Activated CD4-positive, alpha-beta memory T cell treated with anti-CD3 and anti-CD28 coated beads for 36 hours (primary cell): ENCODE measurements at regions of chr5 and their contacts with region 1.

Region 1: DNA sequence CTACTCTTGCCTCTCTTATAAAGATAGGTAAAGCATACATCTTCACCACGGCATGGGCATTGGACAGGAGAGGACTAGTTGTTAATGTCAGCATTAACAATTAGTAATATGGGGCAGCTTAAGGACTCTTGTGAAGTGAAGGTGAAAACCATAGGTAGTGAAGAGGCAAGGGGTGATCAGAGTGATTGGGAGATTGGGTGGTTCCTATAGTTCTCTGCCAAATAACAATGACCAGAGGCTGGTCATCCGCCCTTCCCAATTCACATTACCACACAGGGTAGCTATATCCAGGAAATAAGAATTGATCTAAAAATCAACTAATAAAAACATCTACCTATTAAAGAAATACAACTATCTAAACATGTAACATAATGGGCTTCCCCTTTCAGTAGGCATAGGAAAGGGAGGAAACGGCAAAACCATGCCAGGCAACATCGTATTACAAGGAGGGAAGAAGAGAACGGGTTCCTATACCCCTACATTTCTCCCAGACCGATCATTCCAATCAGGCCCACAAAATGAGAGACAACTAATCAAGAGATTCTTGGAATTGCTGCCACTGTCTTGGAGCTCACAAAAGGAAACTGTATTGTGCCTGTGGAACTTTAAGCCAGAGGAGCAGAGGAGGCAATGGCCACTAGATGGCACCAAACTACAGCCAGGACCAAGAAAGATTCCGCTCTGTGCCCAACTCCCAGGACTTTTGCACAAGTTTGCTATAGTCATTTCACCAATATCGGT is 121.6 kb downstream of the FBXL17 start:
- DNase-seq: peak; percentile 76
- H3K4me3 Mint-ChIP-seq: no peak overlapping the region
- H3K27ac Mint-ChIP-seq: no peak overlapping the region
- H3K4me1 Mint-ChIP-seq: peaks cover 10% of the 10 kb centered on the region
- H3K27me3 Mint-ChIP-seq: no peaks in the 10 kb centered on the region

Region 2: DNA sequence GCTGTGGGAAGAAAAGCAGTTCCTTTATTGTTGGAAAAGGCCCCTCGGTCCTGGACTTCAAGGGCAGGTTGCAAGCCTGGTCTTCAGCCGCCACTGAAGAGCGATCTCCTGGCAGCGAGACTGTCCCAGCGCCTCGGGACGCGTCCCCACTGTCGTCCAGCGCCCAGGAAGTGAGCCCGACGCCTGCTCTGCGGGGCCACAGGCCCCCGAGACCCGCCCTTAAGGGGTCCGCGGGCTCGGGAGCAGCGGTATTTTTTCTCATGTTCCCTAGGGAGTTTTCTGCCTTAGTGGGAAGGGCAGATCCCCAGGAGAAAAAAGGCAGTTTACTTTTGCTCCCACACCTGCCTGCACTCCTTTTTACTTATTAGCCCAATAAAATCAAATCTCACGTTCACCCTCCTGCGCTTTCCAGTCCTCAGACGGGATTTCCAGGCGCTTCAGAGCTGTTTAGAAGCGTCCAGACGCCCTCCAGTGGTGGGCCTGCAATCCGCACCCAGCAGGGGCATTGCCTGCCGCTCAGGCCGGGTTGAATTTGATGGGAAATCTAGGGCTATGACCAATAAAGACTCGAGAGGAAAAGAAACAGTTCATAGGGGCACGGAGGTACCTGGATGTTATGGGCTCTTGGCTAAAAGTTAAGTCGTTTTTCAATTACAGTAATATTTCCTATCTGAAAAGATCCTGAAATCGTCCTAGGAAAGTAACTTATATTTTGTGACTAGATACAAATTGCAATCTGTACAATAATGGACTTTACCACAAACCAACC is 586.7 kb before region 1 on chr5:
- CTCF ChIA-PET with region 1: no interaction called
- POLR2A ChIA-PET with region 1: no interaction called
- intact Hi-C with region 1: no loop called
- DNase-seq: peak; percentile 86
- H3K4me3 Mint-ChIP-seq: peak overlapping the region; percentile 59
- H3K27ac Mint-ChIP-seq: no peak overlapping the region
- H3K4me1 Mint-ChIP-seq: peaks cover 29% of the 10 kb centered on the region
- H3K27me3 Mint-ChIP-seq: peaks cover 52% of the 10 kb centered on the region

Region 3: DNA sequence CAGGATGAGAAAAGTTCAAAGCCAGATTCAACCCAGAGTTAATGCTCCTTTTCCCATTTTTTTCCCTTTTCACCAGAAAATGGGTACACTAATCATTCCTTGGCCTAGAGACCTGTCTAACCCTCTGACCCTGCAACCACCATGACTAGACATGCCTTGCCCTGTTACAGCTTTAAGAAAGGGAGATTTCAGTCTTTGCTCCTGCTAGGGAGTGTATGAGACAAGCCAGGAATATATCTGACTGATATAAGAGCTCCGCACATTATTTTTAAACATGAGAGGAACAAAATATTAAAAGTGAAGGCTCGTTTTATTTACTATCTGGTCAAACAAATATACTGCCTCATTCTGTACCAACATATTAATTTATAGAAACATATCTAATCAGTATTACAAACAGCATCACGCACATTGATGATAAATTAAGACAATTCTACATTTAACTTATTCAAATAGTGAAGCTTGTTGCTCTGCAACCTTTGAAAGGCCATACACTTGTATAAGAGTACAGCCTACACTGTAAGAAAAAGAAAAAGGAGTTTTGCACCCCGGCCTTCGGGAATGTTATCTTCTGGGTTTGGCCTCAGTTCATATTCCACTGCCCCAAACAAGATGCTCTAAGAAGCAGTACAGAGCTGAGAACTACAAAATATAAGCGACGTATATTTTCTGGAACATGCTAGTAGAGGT is 11.0 kb before region 1 on chr5:
- CTCF ChIA-PET with region 1: interaction called, 15 read pairs
- POLR2A ChIA-PET with region 1: no interaction called
- intact Hi-C with region 1: no loop called
- DNase-seq: no peak
- H3K4me3 Mint-ChIP-seq: no peak overlapping the region
- H3K27ac Mint-ChIP-seq: no peak overlapping the region
- H3K4me1 Mint-ChIP-seq: no peaks in the 10 kb centered on the region
- H3K27me3 Mint-ChIP-seq: no peaks in the 10 kb centered on the region

Region 4: DNA sequence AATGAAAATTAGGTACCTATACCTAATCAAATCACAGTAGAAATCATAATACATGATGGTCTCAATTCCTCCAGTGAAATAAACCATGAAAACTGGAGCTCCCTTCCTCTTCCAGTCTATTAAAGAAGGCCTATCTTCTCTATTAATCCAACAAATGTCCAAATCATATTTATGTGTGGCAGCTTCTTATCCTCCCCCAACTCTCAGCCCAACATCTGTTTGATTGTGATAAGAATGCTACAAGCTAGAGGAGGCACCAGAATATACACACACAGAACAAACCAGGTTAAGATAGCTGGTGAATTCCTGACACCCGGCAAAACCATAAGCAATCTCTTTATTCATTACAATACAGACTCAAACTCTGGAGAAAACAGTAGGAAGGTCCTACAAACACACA is 10.8 kb after region 1 on chr5:
- CTCF ChIA-PET with region 1: interaction called, 10 read pairs
- POLR2A ChIA-PET with region 1: no interaction called
- intact Hi-C with region 1: no loop called
- DNase-seq: no peak
- H3K4me3 Mint-ChIP-seq: no peak overlapping the region
- H3K27ac Mint-ChIP-seq: no peak overlapping the region
- H3K4me1 Mint-ChIP-seq: no peaks in the 10 kb centered on the region
- H3K27me3 Mint-ChIP-seq: no peaks in the 10 kb centered on the region

Region 5: GRCh38 chr5:108345541-108346171 is 85.4 kb after region 1 on chr5:
- CTCF ChIA-PET with region 1: interaction called, 71 read pairs
- POLR2A ChIA-PET with region 1: interaction called, 4 read pairs
- intact Hi-C with region 1: loop called (anchors 1 kb)
- DNase-seq: no peak
- H3K4me3 Mint-ChIP-seq: no peak overlapping the region
- H3K27ac Mint-ChIP-seq: no peak overlapping the region
- H3K4me1 Mint-ChIP-seq: no peaks in the 10 kb centered on the region
- H3K27me3 Mint-ChIP-seq: no peaks in the 10 kb centered on the region

Region 6: DNA sequence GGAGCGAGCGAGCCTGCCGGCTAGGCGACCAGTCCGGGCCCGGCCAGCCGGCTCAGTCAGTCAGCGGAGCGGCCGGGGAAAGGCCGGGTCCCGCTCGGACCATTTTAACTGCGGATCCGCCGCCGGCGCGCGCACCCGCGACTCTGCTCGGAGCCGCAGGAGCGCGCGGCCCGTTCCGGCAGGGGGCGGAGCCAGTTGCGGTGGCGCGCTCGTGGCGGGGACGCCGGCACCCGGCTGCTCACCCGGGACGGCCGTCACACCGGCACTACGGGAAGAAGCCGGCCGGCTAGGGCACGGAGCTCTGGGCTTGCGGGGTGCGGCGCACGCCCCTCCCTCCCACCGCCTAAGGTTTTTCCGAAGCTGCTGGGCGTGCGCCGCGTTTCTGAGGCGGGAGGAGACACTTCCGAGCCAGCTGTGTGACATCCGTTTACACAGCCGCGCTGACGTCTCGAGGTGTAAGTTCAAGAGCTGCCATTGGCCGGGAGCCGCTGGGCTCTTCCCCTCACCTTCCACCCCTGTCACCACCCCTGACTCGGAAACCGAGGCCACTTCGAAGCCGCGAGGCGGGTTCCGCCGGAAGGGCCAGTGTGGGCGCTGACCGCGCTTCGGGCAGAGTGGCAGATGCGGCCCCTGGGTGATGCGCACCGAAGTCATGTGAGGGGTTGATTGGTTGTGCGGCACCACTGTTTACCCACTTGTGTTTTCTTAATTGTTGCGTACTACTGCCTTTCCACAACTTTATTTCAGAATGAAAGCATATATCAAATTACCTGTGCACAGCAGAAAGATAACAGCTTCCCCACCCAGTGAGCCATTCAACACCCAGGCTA is 121.9 kb after region 1 on chr5 and contains the start of gene FBXL17:
- CTCF ChIA-PET with region 1: interaction called, 4 read pairs
- POLR2A ChIA-PET with region 1: no interaction called
- intact Hi-C with region 1: loop called (anchors 1 kb)
- DNase-seq: peak; percentile 96
- H3K4me3 Mint-ChIP-seq: peak within 1 kb of the TSS; percentile 79
- H3K27ac Mint-ChIP-seq: peak within 1 kb of the TSS; percentile 92
- H3K4me1 Mint-ChIP-seq: peaks cover 34% of the 10 kb centered on the region
- H3K27me3 Mint-ChIP-seq: peaks cover 1% of the 10 kb centered on the region
- total RNA-seq, gene FBXL17: 5.5 to 6.7 TPM